Endothelial cell of umbilical vein (primary cell): ENCODE measurements at regions of chr7 and their contacts with region 1.

Region 1: DNA sequence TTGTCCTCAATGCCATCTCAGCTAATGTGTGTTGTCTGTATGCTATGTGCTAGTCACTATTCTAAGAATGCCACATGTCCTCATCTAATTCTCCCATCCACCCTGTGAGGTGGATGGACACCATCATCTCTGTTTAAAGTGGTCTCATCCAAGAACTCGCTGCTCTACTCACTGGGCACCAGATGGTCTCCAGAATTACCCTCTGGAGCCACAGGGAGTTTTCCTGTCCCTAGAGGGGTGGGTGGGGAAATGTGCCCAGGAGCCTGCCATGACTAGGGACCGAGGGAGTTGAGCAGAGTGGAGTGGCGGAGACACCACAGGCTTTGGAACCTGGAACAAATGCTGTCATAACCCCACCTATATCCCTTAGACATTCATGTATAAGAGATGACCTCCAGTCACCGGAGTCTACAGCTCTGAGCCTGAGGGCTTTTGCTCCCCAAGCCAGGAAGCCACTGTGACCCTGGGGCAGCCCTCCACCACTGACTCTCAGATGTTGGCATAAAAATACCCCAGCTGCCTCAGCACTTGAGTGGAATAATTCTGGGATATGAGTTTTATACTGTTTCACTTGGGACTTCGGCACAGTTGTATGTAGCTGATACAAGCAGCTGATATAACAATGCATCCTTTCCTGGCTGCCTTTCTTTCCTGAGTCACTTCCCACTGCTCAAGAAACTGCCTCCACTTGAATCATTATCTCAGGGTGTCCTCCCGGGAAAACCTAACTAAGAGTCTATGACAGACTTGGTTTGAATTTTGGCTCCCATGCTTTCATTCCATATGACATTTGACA is 61.5 kb upstream of the RAPGEF5 start:
- DNase-seq: peak; percentile 94
- H3K4me3 ChIP-seq: no peak overlapping the region
- H3K27ac ChIP-seq: peak overlapping the region; percentile 96
- H3K4me1 ChIP-seq: peaks cover 26% of the 10 kb centered on the region
- H3K27me3 ChIP-seq: no peaks in the 10 kb centered on the region
- CTCF ChIP-seq: no peak
- POLR2A ChIP-seq: no peak

Region 2: DNA sequence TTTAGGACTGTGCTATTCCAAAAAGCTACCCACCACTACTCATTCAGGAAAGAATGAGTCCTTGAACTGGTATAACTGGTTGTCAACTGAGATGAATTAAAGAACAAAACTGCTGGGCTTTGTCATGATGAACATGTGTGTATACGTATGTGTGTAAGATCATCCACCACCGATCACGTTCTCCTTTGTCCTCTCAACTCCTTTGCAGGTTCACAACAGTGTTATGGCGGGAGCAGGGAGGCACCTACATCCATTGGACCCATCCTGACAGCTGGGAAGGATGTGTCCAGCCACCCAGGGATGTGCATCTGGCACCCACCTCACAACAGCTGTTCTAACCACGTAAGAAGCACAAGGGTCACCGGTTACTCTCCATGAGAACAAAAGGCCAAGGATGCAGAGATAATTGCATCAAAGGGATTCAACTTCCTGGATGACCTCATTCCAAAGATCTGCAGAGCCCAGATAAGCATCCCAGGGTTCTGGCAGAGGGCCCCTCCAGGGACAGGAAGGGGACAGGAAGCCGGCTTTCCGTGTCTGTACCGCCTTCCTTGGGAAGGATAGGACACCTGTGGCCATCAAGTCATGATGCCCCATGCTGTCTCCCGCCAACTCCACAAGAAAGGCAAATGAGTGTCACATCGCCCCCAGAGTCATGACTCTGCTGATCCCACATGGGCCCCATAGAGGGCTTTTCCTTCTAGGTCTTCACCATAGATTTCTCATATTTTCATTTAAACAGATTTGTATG is 15.4 kb after region 1 on chr7:
- CTCF ChIA-PET with region 1: interaction called, 6 read pairs
- POLR2A ChIA-PET with region 1: no interaction called
- dilution Hi-C with region 1: no loop called
- intact Hi-C with region 1: loop called (anchors 1 kb)
- DNase-seq: peak; percentile 72
- H3K4me3 ChIP-seq: no peak overlapping the region
- H3K27ac ChIP-seq: peak overlapping the region; percentile 77
- H3K4me1 ChIP-seq: peaks cover 28% of the 10 kb centered on the region
- H3K27me3 ChIP-seq: no peaks in the 10 kb centered on the region
- CTCF ChIP-seq: no peak
- POLR2A ChIP-seq: peak; percentile 49